GM18951 (cell line): ENCODE measurements at regions of chr2 and their contacts with region 1.

Region 1: GRCh38 chr2:69565431-69565839 is 78.1 kb downstream of the AAK1 start:
- POLR2A ChIP-seq: no peak

Region 2: DNA sequence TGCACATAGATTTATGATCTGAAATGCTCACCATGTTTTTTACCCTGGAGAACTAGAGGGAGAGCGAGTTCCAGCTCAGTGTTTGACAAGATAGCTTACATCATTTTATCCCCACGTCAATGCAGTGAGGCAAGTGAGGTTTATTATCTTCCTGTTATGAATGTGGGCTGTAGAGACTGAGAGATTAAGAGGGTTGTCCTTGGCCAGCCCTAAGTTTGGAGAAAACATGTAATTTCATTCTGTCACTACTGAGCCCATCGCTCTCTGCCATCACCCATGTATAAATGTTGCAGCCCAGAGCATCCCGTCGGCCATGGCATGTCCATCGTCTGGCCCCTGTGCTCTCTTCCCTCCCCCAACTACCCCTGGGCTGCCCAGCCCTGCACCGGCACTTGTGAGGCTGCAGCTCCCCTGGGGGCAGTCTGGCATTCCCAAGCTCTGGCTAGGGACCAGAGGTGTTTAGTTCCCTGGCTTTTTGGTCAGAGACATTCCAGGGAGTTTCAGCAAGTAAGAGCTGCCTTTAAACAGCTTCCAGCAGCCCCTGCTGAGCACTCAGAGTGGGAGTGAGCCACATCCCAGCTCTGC is 415.7 kb before region 1 on chr2:
- in situ Hi-C with region 1: no loop called
- POLR2A ChIP-seq: no peak

Region 3: DNA sequence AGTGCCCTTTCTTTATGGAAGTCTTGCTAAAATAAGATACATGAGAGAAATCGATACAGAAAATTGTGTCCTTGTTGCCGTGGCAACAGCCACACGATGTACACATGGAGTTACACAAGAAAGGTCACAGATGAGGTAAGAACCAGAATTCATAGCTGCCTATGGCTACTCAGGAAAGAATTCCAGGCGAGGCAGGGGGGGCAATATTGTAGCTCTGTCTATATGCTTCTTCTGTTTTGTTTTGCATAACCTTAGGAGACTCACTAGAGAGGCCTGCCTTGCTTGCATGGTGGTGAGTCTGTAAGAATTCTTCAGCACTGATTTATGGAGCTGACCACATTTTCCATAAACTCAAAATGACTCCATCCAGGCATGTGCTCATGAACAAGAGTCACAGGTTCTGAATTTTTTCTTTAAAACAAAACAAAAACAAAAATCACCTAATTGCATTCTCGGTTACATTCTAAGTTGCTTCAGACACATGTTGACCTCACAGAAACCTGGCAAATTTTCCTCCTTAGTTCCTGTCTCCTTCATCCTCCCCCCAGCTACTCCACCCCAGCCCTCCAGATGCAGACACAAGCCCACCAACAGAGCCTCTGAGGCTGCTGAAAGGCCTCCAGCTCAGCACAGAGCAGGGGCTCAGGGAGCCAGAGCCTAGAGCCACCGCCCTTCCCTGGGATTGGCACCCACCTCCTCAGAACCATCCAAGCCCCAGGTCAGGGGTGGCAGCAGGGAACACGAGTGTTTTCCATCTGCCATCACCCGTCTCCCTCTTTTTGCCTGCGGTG is 368.9 kb before region 1 on chr2:
- in situ Hi-C with region 1: no loop called
- POLR2A ChIP-seq: no peak

Region 4: GRCh38 chr2:69493268-69493667 is 72.2 kb before region 1 on chr2:
- in situ Hi-C with region 1: no loop called
- POLR2A ChIP-seq: no peak

Region 5: DNA sequence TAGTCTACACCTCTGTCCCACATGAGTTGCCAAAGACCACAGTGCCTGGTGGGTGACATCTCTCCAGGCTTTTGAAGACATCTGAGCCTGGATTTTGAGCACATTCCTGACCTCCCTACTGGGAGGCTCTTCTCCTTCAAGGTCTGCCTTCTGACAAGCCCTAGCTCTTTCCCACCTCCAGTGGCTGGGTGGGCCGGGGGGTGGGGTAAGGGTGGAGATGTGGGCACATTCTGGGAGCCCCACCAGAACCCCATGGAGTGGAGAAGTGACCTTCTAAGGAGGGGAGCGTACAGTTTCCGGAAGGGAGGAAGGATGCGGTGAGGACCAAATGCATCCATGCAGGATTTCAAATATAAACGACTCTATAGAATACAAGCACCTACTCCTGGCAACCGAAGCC is 148.6 kb after region 1 on chr2:
- in situ Hi-C with region 1: loop called (anchors 5 kb)
- POLR2A ChIP-seq: no peak

Region 6: GRCh38 chr2:69724540-69725159 is 159.2 kb after region 1 on chr2:
- in situ Hi-C with region 1: no loop called
- POLR2A ChIP-seq: no peak

Region 7: GRCh38 chr2:69816923-69817542 is 251.6 kb after region 1 on chr2:
- in situ Hi-C with region 1: loop called (anchors 25 kb)
- POLR2A ChIP-seq: no peak